ENCODE measurements at regions of chr2 and their contacts with region 1.

Region 1: DNA sequence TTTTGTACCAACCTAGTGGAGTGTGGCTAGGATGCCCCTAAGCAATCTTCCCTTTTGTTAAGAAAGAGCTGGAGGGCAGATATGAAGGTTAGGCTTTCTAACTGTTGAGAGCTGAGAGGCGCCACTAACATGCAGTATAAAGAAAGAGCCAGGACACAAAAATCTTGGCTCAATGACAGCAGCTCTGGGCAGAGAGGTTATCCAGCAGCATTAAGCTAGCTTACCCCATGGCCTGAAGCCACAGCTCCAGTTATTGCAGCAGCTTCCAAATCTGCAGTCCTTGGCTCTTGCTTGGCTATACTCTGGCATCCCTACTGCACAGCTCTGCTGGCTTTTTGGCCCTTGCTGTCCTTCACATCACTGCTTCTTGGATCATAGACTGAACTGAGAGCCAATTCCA is 213.4 kb downstream of the GPD2 start:
- DNase-seq: no peak
- ATAC-seq: no peak
- H3K4me3 ChIP-seq: no peak overlapping the region
- H3K27ac ChIP-seq: no peak overlapping the region
- H3K4me1 ChIP-seq: no peaks in the 10 kb centered on the region
- CTCF ChIP-seq: no peak
- EP300 ChIP-seq: no peak
- POLR2A ChIP-seq: no peak
- RAD21 ChIP-seq: no peak

Region 2: DNA sequence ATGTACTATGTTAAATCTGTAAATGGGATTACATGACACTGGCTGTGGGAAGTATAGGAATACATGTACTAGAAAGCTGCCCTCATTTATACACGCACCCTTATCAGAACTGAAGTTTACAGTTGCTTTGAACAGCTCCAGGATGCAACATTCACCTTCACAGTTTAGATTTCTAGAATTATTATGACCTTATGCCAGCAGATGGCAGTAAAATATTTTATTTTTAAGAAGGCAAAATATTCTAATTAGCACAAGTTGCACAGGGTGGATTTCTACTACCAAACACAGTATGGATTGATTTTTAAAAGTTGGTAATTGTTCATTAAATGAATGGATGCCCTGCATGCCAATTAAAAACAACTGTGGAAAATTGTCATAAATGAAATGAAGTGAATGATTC is 1280.7 kb before region 1 on chr2:
- CTCF ChIA-PET with region 1: no interaction called
- POLR2A ChIA-PET with region 1: interaction called, 10 read pairs
- DNase-seq: peak in 1 of 2 experiments; percentile 19
- ATAC-seq: peak; percentile 30 to 56; a peak in 3 of 6 replicates
- H3K4me3 ChIP-seq: no peak overlapping the region
- H3K27ac ChIP-seq: no peak overlapping the region
- H3K4me1 ChIP-seq: no peaks in the 10 kb centered on the region
- CTCF ChIP-seq: peak; percentile 46
- EP300 ChIP-seq: no peak
- POLR2A ChIP-seq: no peak
- RAD21 ChIP-seq: peak in 1 of 2 experiments; percentile 42; a peak in 2 of 5 replicates

Region 3: GRCh38 chr2:156663757-156664409 is 14.3 kb after region 1 on chr2:
- CTCF ChIA-PET with region 1: no interaction called
- POLR2A ChIA-PET with region 1: no interaction called
- DNase-seq: no peak
- ATAC-seq: no peak
- H3K4me3 ChIP-seq: no peak overlapping the region
- H3K27ac ChIP-seq: no peak overlapping the region
- H3K4me1 ChIP-seq: no peaks in the 10 kb centered on the region
- CTCF ChIP-seq: no peak
- EP300 ChIP-seq: no peak
- POLR2A ChIP-seq: no peak
- RAD21 ChIP-seq: no peak